Ovary (tissue), 10 donors: ENCODE measurements at regions of chr3 and their contacts with region 1.

Region 1: DNA sequence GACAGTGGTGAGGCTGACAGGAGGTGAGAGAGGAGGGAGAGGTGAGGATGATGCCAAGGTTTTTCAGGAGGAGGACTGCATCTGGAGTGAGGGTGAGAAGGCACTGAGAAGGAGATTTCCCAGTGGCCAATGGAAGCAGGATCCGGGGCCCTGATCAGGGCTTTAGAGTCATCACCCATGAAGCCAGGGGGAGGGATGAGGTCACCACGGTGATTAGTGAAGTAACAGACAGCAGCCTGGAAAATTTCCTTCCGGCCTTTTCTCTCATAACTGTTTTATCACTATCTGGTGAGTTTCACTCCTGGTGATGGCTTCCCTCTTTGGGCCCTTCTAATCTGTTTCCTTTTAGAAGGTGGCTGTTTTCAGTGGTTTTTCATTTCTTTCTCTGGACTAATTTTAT is 80.5 kb upstream of the WNT5A start:
- DNase-seq: no peak
- H3K4me3 ChIP-seq: no peak overlapping the region
- H3K27ac ChIP-seq: no peak overlapping the region
- H3K4me1 ChIP-seq: no peaks in the 10 kb centered on the region
- H3K27me3 ChIP-seq: no peaks in the 10 kb centered on the region
- CTCF ChIP-seq: no peak
- EP300 ChIP-seq: no peak
- POLR2A ChIP-seq: no peak

Region 2: GRCh38 chr3:55549177-55549576 is 18.4 kb before region 1 on chr3:
- intact Hi-C with region 1: no loop called
- DNase-seq: no peak
- H3K4me3 ChIP-seq: no peak overlapping the region
- H3K27ac ChIP-seq: no peak overlapping the region
- H3K4me1 ChIP-seq: no peaks in the 10 kb centered on the region
- H3K27me3 ChIP-seq: no peaks in the 10 kb centered on the region
- CTCF ChIP-seq: no peak
- EP300 ChIP-seq: no peak
- POLR2A ChIP-seq: no peak

Region 3: GRCh38 chr3:55595420-55595819 is 27.8 kb after region 1 on chr3:
- intact Hi-C with region 1: loop called in 1 of 4 experiments (anchors 2 kb)
- DNase-seq: no peak
- H3K4me3 ChIP-seq: no peak overlapping the region
- H3K27ac ChIP-seq: no peak overlapping the region
- H3K4me1 ChIP-seq: no peaks in the 10 kb centered on the region
- H3K27me3 ChIP-seq: no peaks in the 10 kb centered on the region
- CTCF ChIP-seq: no peak
- EP300 ChIP-seq: no peak
- POLR2A ChIP-seq: no peak